Body of pancreas (tissue), 4 donors: ENCODE measurements at regions of chr14 and their contacts with region 1.

Region 1: DNA sequence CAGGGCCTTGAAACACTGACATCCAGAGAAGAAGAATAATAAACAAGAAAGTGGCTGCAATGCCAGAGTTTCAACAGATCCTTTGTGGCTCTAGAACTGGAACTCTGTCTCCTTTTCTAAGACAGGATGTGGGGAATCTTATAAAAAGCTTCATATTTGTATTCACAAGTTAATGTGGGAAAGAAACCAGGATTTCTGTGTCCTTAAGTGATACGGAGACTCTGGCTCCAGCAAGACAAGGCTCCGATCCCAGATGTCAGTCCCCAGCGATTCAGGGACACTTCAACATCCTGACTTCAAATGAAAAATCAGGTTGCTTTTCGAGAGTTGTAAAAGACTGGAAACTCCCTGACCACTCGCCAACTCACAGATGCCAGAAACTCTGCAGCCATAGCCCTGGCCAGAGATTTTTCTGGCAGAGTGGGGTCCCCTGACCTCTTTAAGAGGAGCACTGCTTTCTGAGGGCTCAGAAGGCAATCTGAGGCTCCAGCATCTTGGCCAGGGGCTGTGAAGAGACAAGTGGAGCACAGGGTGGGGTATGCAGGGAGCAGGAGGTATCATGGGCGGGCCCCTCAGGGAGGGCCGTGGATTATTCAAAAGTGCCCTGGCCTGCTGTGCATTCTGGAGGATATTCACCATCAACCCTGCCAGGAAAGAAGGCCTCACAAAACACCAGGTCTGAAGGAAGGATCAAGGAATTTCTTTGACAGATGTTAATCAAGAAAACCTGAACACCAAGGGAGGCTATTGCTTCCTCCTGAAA is 53.3 kb downstream of the TMX1 start:
- DNase-seq: peak; percentile 16 to 40 (median 27)
- ATAC-seq: peak; percentile 62
- H3K4me3 ChIP-seq: no peak overlapping the region
- H3K27ac ChIP-seq: peak overlapping the region in 2 of 4 donors; percentile 47 to 56
- H3K4me1 ChIP-seq: peaks cover 4% of the 10 kb centered on the region
- H3K27me3 ChIP-seq: no peaks in the 10 kb centered on the region
- CTCF ChIP-seq: no peak
- POLR2A ChIP-seq: no peak

Region 2: DNA sequence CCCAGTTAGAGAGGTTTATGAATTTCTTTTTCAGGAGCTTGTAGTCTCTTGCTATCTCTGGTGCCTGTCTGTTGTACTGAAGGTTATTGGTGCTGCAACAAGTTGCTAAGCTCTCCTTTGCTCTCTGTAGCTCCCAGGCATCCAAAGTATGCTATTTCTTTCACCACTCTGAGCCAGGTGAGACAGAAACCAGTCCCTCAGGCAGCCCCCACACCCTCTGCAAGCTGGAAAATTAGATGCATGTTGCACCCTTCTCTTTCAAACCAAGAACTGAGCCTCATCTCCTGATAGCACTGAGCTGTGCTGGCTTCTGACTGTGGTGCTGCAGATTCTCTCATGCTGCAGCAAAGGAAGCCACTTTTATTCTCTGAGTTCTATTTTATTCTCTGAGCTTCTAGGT is 188.9 kb before region 1 on chr14:
- intact Hi-C with region 1: no loop called
- DNase-seq: no peak
- ATAC-seq: no peak
- H3K4me3 ChIP-seq: no peak overlapping the region
- H3K27ac ChIP-seq: no peak overlapping the region
- H3K4me1 ChIP-seq: no peaks in the 10 kb centered on the region
- H3K27me3 ChIP-seq: no peaks in the 10 kb centered on the region
- CTCF ChIP-seq: no peak
- POLR2A ChIP-seq: no peak

Region 3: DNA sequence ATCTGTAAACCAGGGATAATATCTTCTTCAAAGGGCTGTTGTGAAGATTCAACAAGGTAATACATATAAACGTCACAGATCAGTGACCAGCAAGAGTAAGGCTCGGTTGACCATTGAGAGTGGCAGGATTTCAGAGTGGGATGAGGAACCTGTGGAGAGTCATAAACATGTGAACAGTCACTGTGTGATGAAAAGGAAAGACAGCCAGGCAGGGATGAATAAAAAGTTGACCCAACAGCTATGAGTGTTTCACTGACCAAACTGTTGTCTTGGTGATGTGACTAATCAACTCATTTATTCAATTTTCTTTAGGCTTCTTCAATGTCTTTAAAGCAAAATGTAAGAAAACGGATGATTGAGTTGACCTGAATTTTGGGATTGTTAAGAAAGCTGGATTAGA is 349.8 kb after region 1 on chr14:
- intact Hi-C with region 1: loop called (anchors 10 kb)
- DNase-seq: no peak
- ATAC-seq: no peak
- H3K4me3 ChIP-seq: no peak overlapping the region
- H3K27ac ChIP-seq: no peak overlapping the region
- H3K4me1 ChIP-seq: peaks cover 3% of the 10 kb centered on the region
- H3K27me3 ChIP-seq: no peaks in the 10 kb centered on the region
- CTCF ChIP-seq: no peak
- POLR2A ChIP-seq: no peak

Region 4: DNA sequence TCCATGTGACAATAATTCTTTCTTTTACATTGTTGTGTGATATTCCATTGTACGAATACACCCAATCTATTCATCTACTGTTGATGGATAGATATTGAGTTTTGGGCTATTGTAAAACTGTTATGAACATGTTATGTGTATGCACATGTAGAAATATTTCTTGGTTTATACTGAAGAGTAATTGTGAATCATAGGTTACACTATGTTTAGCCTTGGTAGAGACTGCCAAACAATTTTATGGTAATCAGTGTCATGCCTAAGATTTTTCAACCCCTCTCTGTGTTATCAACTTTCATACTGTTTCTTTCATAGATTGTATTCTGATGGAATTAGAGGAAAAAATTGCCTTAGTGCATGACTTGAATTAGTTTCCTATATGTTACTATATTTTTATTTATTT is 397.8 kb after region 1 on chr14:
- intact Hi-C with region 1: no loop called
- DNase-seq: no peak
- ATAC-seq: no peak
- H3K4me3 ChIP-seq: no peak overlapping the region
- H3K27ac ChIP-seq: no peak overlapping the region
- H3K4me1 ChIP-seq: no peaks in the 10 kb centered on the region
- H3K27me3 ChIP-seq: no peaks in the 10 kb centered on the region
- CTCF ChIP-seq: no peak
- POLR2A ChIP-seq: no peak